Heart right ventricle (tissue), 16 donors: ENCODE measurements at regions of chr11 and their contacts with region 1.

Region 1: GRCh38 chr11:29458252-29458651 is 558.6 kb downstream of the KCNA4 start:
- DNase-seq: no peak
- ATAC-seq: no peak
- H3K4me3 ChIP-seq: no peak overlapping the region
- H3K27ac ChIP-seq: no peak overlapping the region
- H3K4me1 ChIP-seq: no peaks in the 10 kb centered on the region
- H3K27me3 ChIP-seq: no peaks in the 10 kb centered on the region
- CTCF ChIP-seq: no peak

Region 2: DNA sequence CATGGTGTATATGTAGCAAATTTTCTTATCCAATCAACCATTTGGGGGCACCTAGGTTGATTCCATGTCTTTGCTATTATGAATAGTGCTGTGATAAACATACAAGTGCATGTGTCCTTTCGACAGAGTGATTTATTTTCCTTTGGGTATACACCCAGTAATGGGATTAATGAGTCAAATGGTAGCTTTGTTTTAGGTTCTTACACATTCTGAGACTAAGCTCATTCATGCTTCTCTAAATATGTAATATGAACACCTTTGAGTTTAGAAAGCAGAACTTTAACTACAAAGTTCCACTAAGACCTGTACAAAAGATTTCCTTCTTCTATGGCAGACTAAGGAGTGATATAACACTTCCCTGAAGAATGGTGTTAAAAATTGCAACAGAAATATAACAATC is 68.5 kb before region 1 on chr11:
- intact Hi-C with region 1: no loop called
- DNase-seq: no peak
- ATAC-seq: no peak
- H3K4me3 ChIP-seq: no peak overlapping the region
- H3K27ac ChIP-seq: no peak overlapping the region
- H3K4me1 ChIP-seq: no peaks in the 10 kb centered on the region
- H3K27me3 ChIP-seq: no peaks in the 10 kb centered on the region
- CTCF ChIP-seq: no peak

Region 3: GRCh38 chr11:29527391-29527936 is 69.2 kb after region 1 on chr11:
- intact Hi-C with region 1: loop called in 1 of 10 experiments (anchors 10 kb)
- DNase-seq: no peak
- ATAC-seq: peak in 2 of 8 donors; percentile 42 to 68
- H3K4me3 ChIP-seq: no peak overlapping the region
- H3K27ac ChIP-seq: peak overlapping the region in 1 of 10 donors; percentile 59
- H3K4me1 ChIP-seq: peaks cover 0 to 4% (median 0%) of the 10 kb centered on the region in 9 donors
- H3K27me3 ChIP-seq: no peaks in the 10 kb centered on the region
- CTCF ChIP-seq: peak in 6 of 9 donors; percentile 24 to 44 (median 38)

Region 4: DNA sequence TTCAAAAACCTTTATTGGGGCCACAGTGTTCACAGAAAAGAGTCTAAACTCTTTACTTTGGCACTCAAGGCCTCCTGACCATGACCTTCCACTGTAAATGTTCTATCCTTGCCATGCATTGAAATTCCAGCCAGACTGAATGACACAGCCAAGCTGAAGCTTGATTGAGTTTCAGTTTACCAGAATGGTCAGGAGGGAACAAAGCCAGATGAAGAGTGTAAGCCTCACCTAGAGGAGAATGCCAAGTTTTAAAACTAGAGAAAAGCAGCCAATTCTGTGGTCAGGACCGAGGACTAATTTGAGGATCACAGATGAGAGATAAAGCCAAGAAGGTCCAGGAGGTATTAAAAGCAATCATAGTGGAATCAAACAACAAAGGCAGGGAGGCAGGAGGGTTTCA is 343.3 kb after region 1 on chr11:
- intact Hi-C with region 1: no loop called
- DNase-seq: no peak
- ATAC-seq: no peak
- H3K4me3 ChIP-seq: no peak overlapping the region
- H3K27ac ChIP-seq: no peak overlapping the region
- H3K4me1 ChIP-seq: no peaks in the 10 kb centered on the region
- H3K27me3 ChIP-seq: no peaks in the 10 kb centered on the region
- CTCF ChIP-seq: no peak